Adrenal gland (tissue), 19 donors: ENCODE measurements at regions of chr19 and their contacts with region 1.

Region 1: DNA sequence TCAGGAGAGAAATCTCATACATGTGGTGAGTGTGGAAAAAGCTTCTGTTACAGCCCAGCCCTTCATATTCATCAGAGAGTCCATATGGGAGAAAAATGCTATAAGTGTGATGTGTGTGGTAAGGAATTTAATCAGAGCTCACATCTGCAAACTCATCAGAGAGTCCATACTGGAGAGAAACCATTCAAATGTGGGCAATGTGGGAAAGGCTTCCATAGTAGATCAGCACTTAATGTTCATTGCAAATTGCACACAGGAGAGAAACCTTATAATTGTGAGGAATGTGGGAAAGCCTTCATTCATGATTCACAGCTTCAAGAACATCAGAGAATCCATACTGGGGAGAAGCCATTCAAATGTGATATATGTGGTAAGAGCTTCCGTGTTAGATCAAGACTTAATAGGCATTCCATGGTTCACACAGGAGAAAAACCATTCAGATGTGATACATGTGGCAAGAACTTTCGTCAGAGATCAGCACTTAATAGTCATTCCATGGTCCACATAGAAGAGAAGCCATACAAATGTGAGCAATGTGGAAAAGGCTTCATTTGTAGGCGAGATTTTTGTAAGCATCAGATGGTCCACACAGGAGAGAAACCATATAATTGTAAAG is 15.2 kb downstream of the ZNF221 start:
- DNase-seq: no peak
- H3K4me3 ChIP-seq: peak overlapping the region in 1 of 4 donors; percentile 1
- H3K27ac ChIP-seq: no peak overlapping the region
- H3K4me1 ChIP-seq: no peaks in the 10 kb centered on the region
- H3K27me3 ChIP-seq: no peaks in the 10 kb centered on the region
- CTCF ChIP-seq: no peak
- POLR2A ChIP-seq: no peak

Region 2: GRCh38 chr19:43847884-43848283 is 118.3 kb before region 1 on chr19:
- intact Hi-C with region 1: loop called in 1 of 2 experiments (anchors 10 kb)
- DNase-seq: no peak
- H3K4me3 ChIP-seq: peak overlapping the region in 1 of 4 donors; percentile 3
- H3K27ac ChIP-seq: no peak overlapping the region
- H3K4me1 ChIP-seq: no peaks in the 10 kb centered on the region
- H3K27me3 ChIP-seq: no peaks in the 10 kb centered on the region
- CTCF ChIP-seq: no peak
- POLR2A ChIP-seq: no peak

Region 3: DNA sequence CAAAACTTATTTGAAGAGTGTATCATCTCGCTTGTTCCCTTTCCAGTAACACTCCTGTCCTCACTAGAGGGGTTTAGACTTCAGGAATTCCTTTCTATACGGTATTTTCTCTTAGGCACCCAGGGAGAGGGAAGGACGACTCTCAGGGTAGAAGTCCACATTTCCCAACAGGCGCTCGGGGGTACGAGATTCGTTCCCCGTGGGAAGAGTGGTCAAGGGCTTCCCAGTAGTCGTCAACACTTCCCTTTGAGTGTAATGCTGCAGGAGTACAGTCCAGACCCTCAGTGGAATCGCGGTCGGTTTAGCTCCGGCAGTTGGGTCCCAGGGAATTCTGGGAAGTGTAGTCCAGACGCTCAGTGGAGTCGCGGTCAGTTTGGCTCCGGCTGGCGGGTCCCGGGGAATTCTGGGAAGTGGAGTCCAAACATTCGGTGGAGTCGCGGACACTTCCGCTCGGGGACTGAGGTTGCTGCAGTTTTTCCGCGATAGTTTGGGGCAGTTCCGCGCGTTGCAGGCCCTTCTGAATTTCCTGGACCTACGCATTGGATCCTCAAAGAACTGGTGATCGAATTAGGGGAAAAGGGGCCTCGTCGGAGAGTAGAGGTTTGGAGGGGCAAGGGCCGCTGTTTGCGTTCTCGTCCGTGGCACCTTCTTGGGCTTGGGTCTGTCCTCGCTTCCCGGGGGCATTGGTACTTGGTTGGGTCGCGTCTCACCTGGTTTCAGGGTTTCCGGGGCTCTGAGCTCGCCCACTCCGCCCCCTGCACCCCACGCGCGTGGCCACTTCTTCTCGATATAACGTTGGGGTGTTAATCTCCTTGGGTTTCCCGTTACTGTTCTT is 128.0 kb after region 1 on chr19 and contains the start of gene ZNF224:
- intact Hi-C with region 1: no loop called
- DNase-seq: peak; percentile 91 to 96 (median 94)
- H3K4me3 ChIP-seq: peak within 1 kb of the TSS; percentile 20 to 93 (median 80)
- H3K27ac ChIP-seq: peak within 1 kb of the TSS in 4 of 5 donors; percentile 73 to 90 (median 82)
- H3K4me1 ChIP-seq: peaks cover 0 to 16% of the 10 kb centered on the region in 2 donors
- H3K27me3 ChIP-seq: no peaks in the 10 kb centered on the region
- CTCF ChIP-seq: no peak
- POLR2A ChIP-seq: peak in 1 of 2 donors; percentile 63
- total RNA-seq, gene ZNF224: 14.6 to 35.1 (median 29.8) TPM

Region 4: DNA sequence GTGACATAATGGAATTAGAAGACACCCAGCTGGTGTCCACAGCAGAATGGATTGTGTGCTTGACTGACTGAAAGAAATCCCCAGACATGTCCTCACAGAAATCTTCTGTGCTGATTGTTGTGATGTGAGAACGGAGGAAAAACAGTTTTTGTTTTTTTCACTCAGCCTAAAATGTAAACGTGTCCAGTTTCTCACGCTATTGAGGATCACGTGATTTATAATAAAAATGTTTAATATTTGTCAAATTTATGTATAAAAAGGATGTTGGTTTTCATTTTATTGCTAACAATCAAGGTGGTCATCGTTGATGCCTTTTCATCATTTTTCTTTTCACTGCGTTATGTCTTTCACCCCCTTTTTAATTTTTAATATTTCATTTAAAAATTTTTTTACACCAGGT is 494.0 kb after region 1 on chr19:
- intact Hi-C with region 1: loop called in 1 of 2 experiments (anchors 10 kb)
- DNase-seq: no peak
- H3K4me3 ChIP-seq: no peak overlapping the region
- H3K27ac ChIP-seq: no peak overlapping the region
- H3K4me1 ChIP-seq: no peaks in the 10 kb centered on the region
- H3K27me3 ChIP-seq: no peaks in the 10 kb centered on the region
- CTCF ChIP-seq: no peak
- POLR2A ChIP-seq: no peak